ENCODE measurements at regions of chr22 and their contacts with region 1.

Region 1: DNA sequence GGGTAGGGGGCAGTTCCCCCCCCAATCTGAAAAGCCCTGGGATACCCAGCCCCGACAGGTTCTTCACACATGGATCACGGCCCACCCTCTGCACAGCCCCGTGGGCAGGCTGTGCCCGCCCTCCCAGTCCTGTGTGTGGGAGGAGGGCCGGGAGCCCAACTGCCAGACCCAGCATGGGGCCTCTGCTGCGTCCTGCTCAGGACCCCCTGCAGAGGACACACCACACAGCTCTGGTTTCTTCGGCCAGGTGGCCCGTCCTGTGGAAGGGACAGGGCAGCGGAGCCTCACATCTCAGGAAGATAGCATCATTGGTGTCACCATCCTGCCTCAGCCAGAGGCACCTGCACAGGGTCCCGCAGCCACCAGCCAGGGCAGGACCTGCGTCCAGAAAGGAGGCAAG is 396.0 kb downstream of the TBC1D22A start:
- DNase-seq: no peak
- ATAC-seq: no peak

Region 2: DNA sequence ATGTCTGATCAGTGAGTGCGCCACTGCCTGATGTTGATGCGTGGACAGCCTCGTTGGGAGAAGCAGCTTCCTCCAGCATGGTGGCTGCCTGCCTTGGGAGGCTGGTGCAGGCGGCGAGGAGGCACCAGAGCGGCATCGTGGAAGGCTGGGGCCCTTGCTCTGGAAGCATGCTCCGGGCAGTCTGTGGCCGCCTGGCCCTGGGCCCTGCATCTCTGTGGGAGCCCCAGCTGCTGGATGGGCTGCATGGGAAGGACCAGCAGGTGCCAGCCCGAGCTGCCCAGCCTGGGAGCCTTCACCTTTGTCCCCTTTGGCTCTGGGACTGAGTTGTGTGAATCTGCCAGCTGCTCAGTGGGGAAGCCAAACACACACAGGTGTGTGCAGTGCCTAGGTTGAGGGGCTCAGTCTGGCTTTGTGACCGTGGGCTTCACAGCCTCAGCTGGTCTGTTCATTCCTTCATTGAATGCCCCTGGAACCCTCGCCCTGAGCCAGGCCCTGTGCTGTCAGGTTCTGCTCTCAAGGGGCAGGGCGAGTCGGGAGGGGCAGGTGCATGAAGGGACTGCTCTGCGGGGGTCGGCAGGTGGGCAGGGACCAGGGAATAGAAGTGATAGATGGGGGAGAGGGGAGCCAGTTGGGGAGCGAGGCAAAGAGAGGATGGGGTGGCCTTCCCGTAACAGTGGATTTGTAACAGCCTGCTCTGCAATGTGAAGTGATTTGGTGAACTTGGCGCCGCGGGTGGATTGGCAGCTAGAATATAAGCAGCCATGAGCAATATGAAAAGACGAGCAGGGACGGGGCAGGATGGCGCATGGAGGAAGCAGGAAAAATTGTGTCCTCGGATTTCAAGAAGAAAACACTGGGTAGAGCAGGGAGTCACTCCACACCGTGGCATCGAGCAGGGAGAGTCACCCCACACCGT is 41.8 kb before region 1 on chr22:
- intact Hi-C with region 1: loop called (anchors 2 kb)
- DNase-seq: peak; percentile 35
- ATAC-seq: no peak

Measured in sciatic nerve (tissue), 2 donors.